H1 (cell line): ENCODE measurements at regions of chr9 and their contacts with region 1.

Region 1: GRCh38 chr9:115591584-115591984 is 473.6 kb upstream of the TNC start:
- DNase-seq: peak; percentile 48 to 63
- H3K4me3 ChIP-seq: no peak overlapping the region
- H3K27ac ChIP-seq: no peak overlapping the region
- H3K4me1 ChIP-seq: peaks cover 1 to 8% (median 2%) of the 10 kb centered on the region in 4 experiments; a peak in 3 of 7 replicates
- H3K27me3 ChIP-seq: no peaks in the 10 kb centered on the region
- CTCF ChIP-seq: peak in 2 of 3 experiments; percentile 67 to 92; a peak in 3 of 4 replicates
- EP300 ChIP-seq: no peak
- POLR2A ChIP-seq: no peak
- RAD21 ChIP-seq: peak; percentile 84 to 89

Region 2: DNA sequence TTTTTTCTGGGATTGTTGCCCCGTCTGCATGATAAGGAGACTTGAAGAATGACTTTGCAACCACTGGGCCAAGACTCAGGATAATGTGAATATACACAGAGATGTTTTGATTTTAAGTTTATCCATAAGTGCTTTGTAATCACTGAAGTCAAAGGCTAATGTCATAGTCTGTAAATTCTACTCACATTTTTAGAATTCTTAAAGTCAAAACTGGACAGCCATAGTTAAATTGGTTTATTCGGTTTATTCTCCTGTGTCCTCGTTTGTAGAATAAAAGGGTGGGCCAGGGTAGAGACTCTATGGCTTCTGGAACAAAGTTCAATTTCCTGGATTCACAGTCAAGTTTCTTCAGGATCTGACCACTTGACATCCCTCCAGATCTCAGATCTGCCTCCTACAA is 145.9 kb before region 1 on chr9:
- CTCF ChIA-PET with region 1: no interaction called
- POLR2A ChIA-PET with region 1: no interaction called
- DNase-seq: no peak
- H3K4me3 ChIP-seq: no peak overlapping the region
- H3K27ac ChIP-seq: no peak overlapping the region
- H3K4me1 ChIP-seq: no peaks in the 10 kb centered on the region
- H3K27me3 ChIP-seq: no peaks in the 10 kb centered on the region
- CTCF ChIP-seq: no peak
- EP300 ChIP-seq: no peak
- POLR2A ChIP-seq: no peak
- RAD21 ChIP-seq: no peak

Region 3: DNA sequence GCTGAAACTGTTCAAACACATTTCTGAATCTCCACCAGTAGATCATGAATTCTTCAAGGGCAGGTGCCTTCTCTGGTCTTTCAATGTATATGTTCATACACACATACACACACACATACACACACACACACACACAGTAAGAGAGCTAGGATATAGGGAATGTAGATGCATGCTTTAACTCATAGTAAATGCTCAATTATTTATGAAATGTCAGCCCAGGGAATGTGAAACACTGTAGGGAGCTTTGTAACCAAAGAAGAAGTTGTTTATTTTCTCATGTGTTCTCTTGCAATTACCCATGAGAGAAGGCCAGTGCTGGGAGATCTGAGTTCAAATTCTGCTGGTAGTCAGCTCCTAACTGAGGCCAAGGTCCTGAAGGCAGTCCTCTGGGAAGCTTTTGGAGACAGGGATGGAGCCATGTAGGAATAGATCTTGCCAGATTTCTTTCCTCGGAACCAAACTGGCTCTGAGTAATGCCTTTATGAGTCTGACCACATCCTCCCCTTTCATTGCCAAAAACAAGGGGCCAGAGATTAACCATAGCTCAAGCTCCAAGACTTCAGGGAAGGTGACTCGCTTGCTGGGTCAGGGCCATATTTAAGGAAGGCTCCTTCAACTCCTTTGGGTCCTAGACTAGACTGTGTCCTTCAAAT is 13.4 kb after region 1 on chr9:
- CTCF ChIA-PET with region 1: interaction called, 55 read pairs
- POLR2A ChIA-PET with region 1: no interaction called
- DNase-seq: no peak
- H3K4me3 ChIP-seq: no peak overlapping the region
- H3K27ac ChIP-seq: no peak overlapping the region
- H3K4me1 ChIP-seq: no peaks in the 10 kb centered on the region
- H3K27me3 ChIP-seq: no peaks in the 10 kb centered on the region
- CTCF ChIP-seq: no peak
- EP300 ChIP-seq: no peak
- POLR2A ChIP-seq: no peak
- RAD21 ChIP-seq: no peak

Region 4: DNA sequence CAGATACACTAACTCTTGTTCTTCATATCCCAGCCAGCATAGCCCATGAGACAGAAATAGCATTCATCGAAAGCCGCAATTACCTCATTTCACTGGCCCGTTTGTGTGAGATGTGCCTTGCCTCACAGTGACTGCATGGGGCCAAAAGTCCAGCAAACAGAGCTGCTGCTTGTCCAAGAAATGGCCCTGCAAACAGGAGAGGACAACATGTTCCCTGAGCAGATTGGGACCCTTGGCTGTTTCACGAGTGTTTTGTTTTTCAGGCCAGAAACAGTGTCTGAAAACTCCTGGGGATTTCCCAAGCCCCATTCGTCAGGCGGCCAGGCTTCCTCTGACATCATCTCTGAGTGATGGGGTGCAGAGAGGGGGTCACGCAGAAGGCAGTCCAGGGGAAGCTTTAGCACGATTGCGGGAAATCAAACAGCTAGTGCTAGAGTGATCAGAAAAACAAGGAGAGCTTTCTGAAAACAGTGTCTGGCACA is 58.4 kb after region 1 on chr9:
- CTCF ChIA-PET with region 1: interaction called, 10 read pairs
- POLR2A ChIA-PET with region 1: no interaction called
- DNase-seq: no peak
- H3K4me3 ChIP-seq: no peak overlapping the region
- H3K27ac ChIP-seq: no peak overlapping the region
- H3K4me1 ChIP-seq: no peaks in the 10 kb centered on the region
- H3K27me3 ChIP-seq: no peaks in the 10 kb centered on the region
- CTCF ChIP-seq: no peak
- EP300 ChIP-seq: no peak
- POLR2A ChIP-seq: no peak
- RAD21 ChIP-seq: no peak

Region 5: DNA sequence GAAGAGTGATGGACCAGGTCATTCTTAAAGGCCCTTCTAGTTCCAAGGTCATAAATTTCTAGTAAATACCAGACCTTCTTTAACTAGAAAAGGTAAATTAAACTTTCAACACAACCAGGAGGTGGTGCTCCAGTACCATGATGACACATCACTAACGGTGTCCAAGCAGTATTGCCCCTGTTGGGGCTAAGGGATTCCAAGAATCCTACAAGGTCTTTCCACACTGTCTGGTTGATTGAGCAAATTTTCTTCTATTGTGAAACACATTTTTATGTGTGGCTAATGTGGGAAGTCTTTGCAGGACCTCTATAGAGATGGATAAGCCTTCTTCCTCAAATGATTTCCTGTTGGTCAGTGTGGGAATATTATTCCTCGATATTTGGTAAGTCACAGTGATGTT is 102.4 kb after region 1 on chr9:
- CTCF ChIA-PET with region 1: interaction called, 19 read pairs
- POLR2A ChIA-PET with region 1: no interaction called
- DNase-seq: peak in 1 of 2 experiments; percentile 52
- H3K4me3 ChIP-seq: no peak overlapping the region
- H3K27ac ChIP-seq: no peak overlapping the region
- H3K4me1 ChIP-seq: no peaks in the 10 kb centered on the region
- H3K27me3 ChIP-seq: no peaks in the 10 kb centered on the region
- CTCF ChIP-seq: peak; percentile 16 to 65 (median 59)
- EP300 ChIP-seq: no peak
- POLR2A ChIP-seq: no peak
- RAD21 ChIP-seq: peak; percentile 91 to 93

Region 6: DNA sequence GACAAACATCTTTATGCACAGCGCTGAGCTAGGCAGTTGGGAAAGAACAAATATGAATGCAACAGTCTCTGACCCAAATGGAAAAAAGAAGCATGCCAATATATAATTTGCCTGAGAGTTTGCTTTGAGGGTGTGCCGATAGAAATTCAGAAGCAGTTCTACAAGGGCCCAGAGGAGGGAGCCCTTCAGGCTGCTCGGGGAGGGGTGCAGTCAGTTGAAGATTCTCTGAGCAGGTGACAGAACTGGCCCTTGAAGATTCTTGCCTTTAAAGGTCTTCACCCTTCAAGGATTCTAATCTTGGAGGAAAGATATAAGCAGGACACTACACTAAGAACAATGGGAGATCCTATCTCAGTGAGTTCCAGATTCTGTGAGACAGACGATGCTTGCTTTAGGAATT is 558.3 kb after region 1 on chr9:
- CTCF ChIA-PET with region 1: interaction called, 33 read pairs
- POLR2A ChIA-PET with region 1: no interaction called
- DNase-seq: peak in 1 of 2 experiments; percentile 75
- H3K4me3 ChIP-seq: no peak overlapping the region
- H3K27ac ChIP-seq: no peak overlapping the region
- H3K4me1 ChIP-seq: no peaks in the 10 kb centered on the region; a peak in 1 of 7 replicates
- H3K27me3 ChIP-seq: peaks cover 2 to 10% (median 6%) of the 10 kb centered on the region in 4 experiments; a peak in 6 of 7 replicates
- CTCF ChIP-seq: peak; percentile 71 to 90 (median 81)
- EP300 ChIP-seq: no peak
- POLR2A ChIP-seq: no peak
- RAD21 ChIP-seq: peak; percentile 78 to 85

Region 7: DNA sequence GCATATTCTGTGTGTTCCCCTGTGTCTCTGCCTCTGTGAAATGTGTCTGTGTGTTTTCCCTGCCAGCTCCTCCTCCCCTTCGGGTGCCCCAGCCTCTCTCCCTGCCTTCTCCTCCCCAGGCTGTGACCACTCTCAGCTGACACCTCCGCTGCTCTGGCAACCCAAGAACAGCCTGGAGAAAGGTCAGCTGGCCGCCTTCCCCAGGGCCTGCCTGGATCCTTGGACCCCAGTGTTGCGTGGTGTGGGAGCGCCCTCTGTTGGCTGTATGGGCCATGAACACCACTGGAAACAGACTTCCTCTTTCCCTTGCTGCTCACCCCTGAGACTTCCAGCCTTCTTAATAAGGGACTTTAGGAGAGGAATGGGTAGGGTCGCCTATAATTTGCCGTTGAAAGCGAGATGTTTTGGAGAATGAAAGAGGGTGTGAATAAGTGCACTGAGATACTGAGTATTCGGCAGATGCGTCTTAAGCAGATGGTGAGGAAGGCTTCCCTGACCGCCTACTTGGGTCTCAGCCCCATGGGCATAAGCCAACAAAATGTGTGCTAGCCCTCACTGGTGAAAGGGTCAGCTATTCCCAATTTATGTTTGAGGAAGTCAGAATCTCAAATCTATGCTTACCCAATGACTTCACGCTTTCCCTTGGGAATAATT is 980.6 kb after region 1 on chr9:
- CTCF ChIA-PET with region 1: interaction called, 24 read pairs
- POLR2A ChIA-PET with region 1: no interaction called
- DNase-seq: peak; percentile 46 to 91
- H3K4me3 ChIP-seq: no peak overlapping the region
- H3K27ac ChIP-seq: no peak overlapping the region
- H3K4me1 ChIP-seq: peaks cover 0 to 3% (median under 1%) of the 10 kb centered on the region in 4 experiments; a peak in 3 of 7 replicates
- H3K27me3 ChIP-seq: no peaks in the 10 kb centered on the region
- CTCF ChIP-seq: peak; percentile 92 to 96 (median 95)
- EP300 ChIP-seq: no peak
- POLR2A ChIP-seq: no peak
- RAD21 ChIP-seq: peak; percentile 99 to 100